MCF 10A (cell line): ENCODE measurements at regions of chr13 and their contacts with region 1.

Region 1: DNA sequence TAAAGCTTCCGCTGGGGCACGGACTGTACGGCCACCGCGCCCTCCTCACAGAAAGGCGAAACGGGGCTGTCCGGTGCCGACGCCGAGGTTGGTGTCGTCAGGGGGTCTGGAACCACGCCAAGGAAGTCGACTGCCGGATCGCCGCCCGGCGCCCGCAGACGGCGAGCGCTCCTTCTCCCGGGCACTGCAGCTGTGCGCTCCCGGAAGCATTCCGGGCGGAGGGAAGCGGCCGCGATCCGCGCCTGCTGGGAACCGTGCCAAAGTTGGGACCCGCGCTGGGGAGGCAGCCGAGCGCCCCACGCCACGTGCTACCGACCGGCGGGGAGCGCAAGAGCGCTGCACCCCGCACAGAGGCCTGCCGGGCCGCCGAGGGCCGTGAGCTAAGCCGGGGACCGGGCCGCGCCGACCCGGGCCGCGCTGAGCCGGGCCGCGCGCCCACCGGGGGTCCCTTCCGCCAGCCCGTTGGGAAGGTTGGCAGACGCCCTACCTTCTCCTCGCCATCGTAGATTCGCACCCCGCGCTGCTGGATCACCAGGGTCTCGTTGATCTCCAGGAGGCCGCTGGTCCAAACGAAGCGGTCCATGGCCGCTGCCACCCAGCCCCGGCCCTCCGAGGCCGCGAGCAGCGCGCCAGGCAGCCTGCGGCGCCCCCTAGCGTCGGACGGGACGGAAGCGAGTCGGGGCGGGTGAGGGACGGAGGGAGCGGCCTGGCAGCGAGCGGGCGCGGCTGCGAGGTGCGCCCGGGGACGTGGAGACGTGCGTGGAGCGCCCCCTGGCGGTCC is at the start of gene VPS36:
- DNase-seq: peak; percentile 94
- H3K4me3 Mint-ChIP-seq: peak within 1 kb of the TSS; percentile 94
- H3K27ac Mint-ChIP-seq: peak within 1 kb of the TSS; percentile 94
- H3K4me1 Mint-ChIP-seq: peaks cover 18% of the 10 kb centered on the region
- H3K27me3 Mint-ChIP-seq: no peaks in the 10 kb centered on the region
- CTCF ChIP-seq: peak; percentile 99
- total RNA-seq, gene VPS36: 42.8 and 43.4 TPM in 2 replicates

Region 2: DNA sequence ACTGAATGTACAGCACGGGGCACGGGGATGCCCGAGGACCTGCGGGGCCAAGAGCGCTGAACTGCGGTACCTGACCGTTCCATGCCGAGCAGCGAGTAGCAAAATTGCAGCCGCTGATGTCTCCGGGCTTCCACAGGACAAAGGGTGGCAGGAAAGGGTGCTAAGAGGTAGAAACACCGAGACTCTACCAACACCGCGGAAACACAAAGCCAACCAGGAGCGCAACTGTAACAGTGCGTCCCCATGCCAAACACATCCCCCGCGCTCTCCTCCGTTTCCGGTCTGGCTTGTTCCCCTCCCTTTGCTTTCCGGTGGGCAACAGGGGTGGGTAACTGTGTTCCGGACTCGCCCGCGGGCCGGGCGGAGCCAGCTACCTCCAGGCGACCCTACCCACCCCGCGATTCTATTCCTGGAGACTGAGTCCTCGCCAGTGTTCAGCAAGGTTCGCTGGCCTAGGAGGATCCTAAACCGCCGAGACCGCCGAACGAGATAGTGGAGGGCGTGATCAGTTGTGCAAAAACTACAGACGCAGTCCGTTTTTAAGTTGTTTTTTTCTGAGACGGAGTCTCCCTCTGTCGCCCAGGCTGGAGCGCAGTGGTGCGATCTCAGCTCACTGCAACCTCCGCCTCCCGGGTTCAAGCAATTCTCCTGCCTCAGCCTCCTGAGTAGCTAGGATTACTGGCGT is 255.9 kb before region 1 on chr13:
- CTCF ChIA-PET with region 1: interaction called, 4 read pairs
- POLR2A ChIA-PET with region 1: interaction called, 10 read pairs
- intact Hi-C with region 1: loop called (anchors 5 kb)
- DNase-seq: peak; percentile 85
- H3K4me3 Mint-ChIP-seq: peak overlapping the region; percentile 96
- H3K27ac Mint-ChIP-seq: peak overlapping the region; percentile 91
- H3K4me1 Mint-ChIP-seq: peaks cover 6% of the 10 kb centered on the region
- H3K27me3 Mint-ChIP-seq: no peaks in the 10 kb centered on the region
- CTCF ChIP-seq: no peak

Region 3: DNA sequence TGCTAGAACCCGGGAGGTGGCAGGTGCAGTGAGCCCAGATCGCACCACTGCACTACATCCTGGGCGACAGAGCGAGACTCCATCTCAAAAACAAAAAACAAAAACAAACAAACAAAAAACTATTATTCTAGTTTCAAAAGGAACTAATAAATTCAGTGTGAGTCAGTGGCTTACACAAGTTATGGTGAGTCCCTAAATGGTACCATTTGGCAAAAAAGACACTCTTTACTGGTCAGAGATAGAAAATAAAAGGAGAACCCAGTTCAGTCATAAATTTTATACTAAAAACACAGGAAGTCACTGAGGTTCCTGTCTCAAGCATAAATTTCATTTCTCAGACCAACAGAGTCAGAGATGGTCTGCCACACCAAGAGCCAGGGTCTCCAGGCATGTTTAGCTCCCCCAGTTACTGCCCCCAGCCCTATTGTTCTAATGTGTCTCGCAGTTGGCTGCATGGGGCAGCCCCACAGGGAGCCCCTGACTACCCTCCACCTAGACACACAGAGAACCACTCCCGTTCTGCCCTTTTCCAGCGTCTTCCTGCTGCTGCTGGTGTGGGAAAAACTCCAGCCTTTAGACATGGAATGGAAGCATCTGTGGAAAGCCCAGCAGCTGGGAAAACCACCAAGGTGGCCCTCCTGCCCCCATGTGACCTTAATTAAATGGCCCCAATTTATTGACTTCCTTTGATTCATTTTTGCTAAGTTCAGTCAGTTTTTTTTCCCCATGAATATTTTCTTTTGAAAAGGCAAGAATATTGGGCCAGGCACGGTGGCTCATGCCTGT is 56.4 kb before region 1 on chr13:
- CTCF ChIA-PET with region 1: interaction called, 13 read pairs
- POLR2A ChIA-PET with region 1: no interaction called
- intact Hi-C with region 1: no loop called
- DNase-seq: no peak
- H3K4me3 Mint-ChIP-seq: no peak overlapping the region
- H3K27ac Mint-ChIP-seq: no peak overlapping the region
- H3K4me1 Mint-ChIP-seq: peaks cover 10% of the 10 kb centered on the region
- H3K27me3 Mint-ChIP-seq: no peaks in the 10 kb centered on the region
- CTCF ChIP-seq: no peak

Region 4: GRCh38 chr13:52411629-52412028 is 38.6 kb before region 1 on chr13:
- CTCF ChIA-PET with region 1: interaction called, 31 read pairs
- POLR2A ChIA-PET with region 1: interaction called, 101 read pairs
- intact Hi-C with region 1: loop called (anchors 2 kb)
- DNase-seq: peak; percentile 89
- H3K4me3 Mint-ChIP-seq: no peak overlapping the region
- H3K27ac Mint-ChIP-seq: peak overlapping the region; percentile 88
- H3K4me1 Mint-ChIP-seq: peaks cover 33% of the 10 kb centered on the region
- H3K27me3 Mint-ChIP-seq: no peaks in the 10 kb centered on the region
- CTCF ChIP-seq: no peak

Region 5: GRCh38 chr13:52652196-52652979 is 202.2 kb after region 1 on chr13 and contains the start of gene SUGT1:
- CTCF ChIA-PET with region 1: interaction called, 4 read pairs
- POLR2A ChIA-PET with region 1: interaction called, 17 read pairs
- intact Hi-C with region 1: loop called (anchors 2 kb)
- DNase-seq: peak; percentile 98
- H3K4me3 Mint-ChIP-seq: no peak within 1 kb of the TSS
- H3K27ac Mint-ChIP-seq: no peak within 1 kb of the TSS
- H3K4me1 Mint-ChIP-seq: no peaks in the 10 kb centered on the region
- H3K27me3 Mint-ChIP-seq: no peaks in the 10 kb centered on the region
- CTCF ChIP-seq: peak; percentile 36
- total RNA-seq, gene SUGT1: 49.0 and 58.4 TPM in 2 replicates